ENCODE measurements at regions of chr10 and their contacts with region 1.

Region 1: DNA sequence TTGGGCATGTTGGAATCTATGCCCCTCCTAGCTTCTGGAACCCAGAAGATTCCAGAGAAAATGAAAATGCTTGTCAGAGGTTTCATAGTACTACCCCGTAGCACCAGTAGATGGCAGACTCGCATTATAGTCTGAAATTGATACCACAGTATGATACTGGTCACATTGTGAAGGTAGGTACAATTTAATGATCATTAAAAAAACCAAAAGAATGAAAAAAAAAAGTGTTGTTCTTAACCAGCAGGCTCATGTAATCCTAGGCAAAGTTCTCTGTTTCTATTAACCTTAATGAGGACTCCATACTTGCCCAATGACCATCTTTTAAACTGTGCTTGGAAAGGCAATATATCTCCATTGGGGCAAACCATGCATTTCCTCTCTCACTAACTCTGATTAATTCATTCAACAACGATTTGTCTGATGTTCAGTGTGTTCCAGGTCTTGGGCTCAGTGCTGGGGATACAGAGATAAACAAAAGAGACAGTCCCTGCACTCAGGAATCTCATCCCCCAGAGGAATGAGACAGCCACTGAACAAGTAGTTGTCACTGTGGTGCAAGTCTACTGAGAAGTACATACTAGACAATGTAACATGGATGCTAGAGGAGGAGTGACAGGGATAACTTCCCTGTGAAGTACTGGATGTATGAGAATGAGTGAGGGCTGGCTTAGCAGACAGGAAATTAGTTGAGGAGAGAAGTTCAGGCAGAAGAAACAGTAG is 223.5 kb upstream of the PHYHIPL start:
- H3K4me3 ChIP-seq: no peak overlapping the region
- H3K27ac ChIP-seq: no peak overlapping the region
- H3K4me1 ChIP-seq: no peaks in the 10 kb centered on the region
- CTCF ChIP-seq: peak; percentile 61

Region 2: DNA sequence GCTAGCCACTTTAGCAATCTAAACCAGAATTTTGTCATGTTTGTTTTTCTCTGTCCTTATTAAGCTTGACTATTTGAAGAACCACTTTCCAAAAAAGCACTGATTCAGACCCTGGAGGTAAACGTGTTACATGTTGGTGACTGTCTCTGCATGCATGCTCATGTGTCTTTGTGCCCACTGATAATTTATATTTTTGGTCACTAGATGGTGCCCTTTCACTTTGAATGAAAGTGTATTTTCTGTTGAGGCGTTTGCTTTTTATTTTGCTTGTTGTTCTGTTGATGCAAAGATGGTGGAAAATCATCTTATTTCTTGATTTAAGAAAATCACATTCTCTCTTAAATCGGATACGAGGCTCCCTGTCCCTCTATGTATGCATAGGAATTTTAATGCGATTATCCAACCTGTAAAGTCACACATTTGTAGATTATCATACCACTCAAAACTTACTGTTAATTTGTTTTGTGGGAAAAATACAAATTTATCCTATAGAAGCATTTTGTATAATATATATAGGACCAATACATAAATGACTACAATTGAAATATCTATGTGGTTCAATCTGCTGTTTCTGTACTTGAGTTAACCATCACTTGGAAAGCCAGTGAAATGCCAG is 170.9 kb before region 1 on chr10:
- CTCF ChIA-PET with region 1: interaction called, 17 read pairs
- POLR2A ChIA-PET with region 1: no interaction called
- H3K4me3 ChIP-seq: no peak overlapping the region
- H3K27ac ChIP-seq: no peak overlapping the region
- H3K4me1 ChIP-seq: no peaks in the 10 kb centered on the region
- CTCF ChIP-seq: no peak

Region 3: DNA sequence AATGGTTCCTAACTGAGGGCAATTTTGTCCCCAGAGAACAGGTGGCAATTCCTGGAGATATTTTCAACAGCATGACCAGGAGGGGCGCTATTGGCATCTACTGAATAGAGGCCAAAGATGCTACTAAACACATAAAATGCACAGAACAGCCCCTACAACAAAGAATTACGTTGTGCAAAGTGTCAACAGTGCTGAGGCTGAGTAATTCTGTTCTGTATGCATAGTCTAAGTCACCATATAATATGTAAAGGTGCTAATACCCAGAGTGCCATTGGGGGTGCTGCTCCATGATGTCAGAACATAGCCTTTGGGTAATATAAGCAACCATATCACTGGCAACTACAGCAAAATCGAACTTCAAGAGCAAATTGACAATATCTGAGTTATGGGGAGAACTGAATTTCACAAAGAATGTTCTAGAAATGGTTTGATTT is 10.2 kb after region 1 on chr10:
- CTCF ChIA-PET with region 1: interaction called, 10 read pairs
- POLR2A ChIA-PET with region 1: no interaction called
- H3K4me3 ChIP-seq: no peak overlapping the region
- H3K27ac ChIP-seq: no peak overlapping the region
- H3K4me1 ChIP-seq: no peaks in the 10 kb centered on the region
- CTCF ChIP-seq: no peak

Region 4: DNA sequence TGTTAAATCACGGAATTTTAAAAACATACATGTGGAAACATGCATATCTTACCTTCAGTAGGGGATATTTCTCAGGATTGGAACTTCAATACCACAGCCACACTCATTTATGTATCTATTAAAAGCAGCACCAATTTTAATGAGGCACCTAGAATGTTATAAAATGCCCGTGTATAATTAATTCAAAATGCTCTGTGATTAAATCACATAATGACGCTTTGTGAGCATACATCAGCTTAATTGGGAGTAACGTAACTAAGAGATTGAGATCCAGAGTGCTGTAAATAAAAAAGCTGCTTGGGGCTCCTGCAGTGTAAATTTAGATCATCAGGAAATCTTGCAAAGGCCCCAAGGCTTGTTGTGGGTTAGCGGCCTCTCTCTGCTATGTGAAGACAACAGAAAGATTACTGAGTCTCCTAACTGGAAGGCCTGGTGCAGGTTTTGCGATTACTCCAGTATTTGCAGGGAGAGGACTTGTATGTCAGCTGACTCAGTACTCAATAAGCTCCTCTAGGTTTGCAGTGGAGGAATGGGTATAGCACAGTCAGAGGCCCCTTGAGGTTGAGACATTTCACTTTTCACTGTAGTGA is 28.0 kb after region 1 on chr10:
- CTCF ChIA-PET with region 1: no interaction called
- POLR2A ChIA-PET with region 1: no interaction called
- H3K4me3 ChIP-seq: no peak overlapping the region
- H3K27ac ChIP-seq: no peak overlapping the region
- H3K4me1 ChIP-seq: no peaks in the 10 kb centered on the region
- CTCF ChIP-seq: no peak

Region 5: DNA sequence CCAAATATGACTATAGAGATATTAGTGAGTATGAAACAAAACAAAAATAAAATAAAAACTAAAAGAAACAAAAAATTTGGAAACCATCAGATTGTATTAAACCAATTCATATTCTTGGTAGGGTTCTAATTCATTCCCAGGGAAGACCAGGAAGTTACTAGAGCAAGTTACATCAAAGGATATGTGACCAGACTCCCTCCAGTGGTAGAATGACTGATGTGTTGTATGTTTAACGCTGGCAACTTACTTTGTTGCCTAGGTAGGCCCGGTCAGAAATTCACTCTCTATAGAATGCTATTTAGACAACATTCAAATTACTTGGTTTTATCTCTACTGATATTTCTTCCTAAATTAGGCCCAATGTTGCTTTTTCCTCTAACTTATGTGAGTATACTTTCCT is 228.8 kb after region 1 on chr10:
- CTCF ChIA-PET with region 1: interaction called, 15 read pairs
- POLR2A ChIA-PET with region 1: no interaction called
- H3K4me3 ChIP-seq: no peak overlapping the region
- H3K27ac ChIP-seq: no peak overlapping the region
- H3K4me1 ChIP-seq: 0 out of 2 replicates have a peak, but pooled peaks cover 3% of the 10 kb centered on the region
- CTCF ChIP-seq: peak; percentile 38; the same call in 1 of the 2 replicates

Region 6: GRCh38 chr10:59234816-59235429 is 282.0 kb after region 1 on chr10:
- CTCF ChIA-PET with region 1: interaction called, 19 read pairs
- POLR2A ChIA-PET with region 1: no interaction called
- H3K4me3 ChIP-seq: no peak overlapping the region
- H3K27ac ChIP-seq: no peak overlapping the region
- H3K4me1 ChIP-seq: 0 out of 2 replicates have a peak, but pooled peaks cover 2% of the 10 kb centered on the region
- CTCF ChIP-seq: no peak

Region 7: GRCh38 chr10:59580026-59580863 is 627.3 kb after region 1 on chr10:
- CTCF ChIA-PET with region 1: interaction called, 16 read pairs
- POLR2A ChIA-PET with region 1: no interaction called
- H3K4me3 ChIP-seq: no peak overlapping the region
- H3K27ac ChIP-seq: no peak overlapping the region
- H3K4me1 ChIP-seq: no peaks in the 10 kb centered on the region
- CTCF ChIP-seq: 0 out of 2 replicates have a peak, but pooled peaks have one; percentile 15

Measured in HEK293 (cell line).